ENCODE measurements at regions of chr14 and their contacts with region 1.

Region 1: DNA sequence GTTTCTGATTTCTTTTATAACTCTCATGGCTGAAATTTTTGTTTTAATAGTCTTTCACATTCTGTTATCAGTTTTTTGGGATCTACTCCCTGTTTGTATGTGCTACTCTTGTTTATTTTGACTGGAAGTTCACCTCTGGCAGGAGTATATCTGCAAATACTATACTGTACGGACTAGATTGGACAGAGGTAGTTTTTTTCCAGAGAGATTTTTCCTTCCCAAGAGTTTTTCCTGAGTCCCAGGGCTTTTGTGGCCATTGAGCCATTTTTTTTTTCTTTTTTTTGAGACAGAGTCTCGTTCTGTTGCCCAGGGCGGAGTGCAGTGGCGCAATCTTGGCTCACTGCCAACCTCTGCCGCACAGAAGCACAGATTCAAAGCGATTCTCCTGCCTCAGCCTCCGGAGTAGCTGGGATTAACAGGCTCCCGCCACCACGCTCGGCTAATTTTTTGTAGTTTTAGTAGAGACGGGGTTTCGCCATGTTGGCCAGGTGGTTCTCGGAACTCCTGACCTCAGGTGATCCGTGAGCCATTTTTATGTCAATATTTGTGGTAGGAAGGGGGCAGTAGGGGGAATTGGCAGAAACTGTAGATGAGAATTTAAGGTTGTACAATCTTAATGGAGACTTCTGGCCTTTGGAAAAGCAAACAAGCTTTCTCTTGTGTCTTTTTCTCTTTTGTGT is 19.3 kb downstream of the KTN1 start:
- DNase-seq: peak; percentile 50
- ATAC-seq: peak; percentile 92
- H3K4me3 ChIP-seq: peak overlapping the region; percentile 26 to 54
- H3K27ac ChIP-seq: peak overlapping the region; percentile 92
- H3K4me1 ChIP-seq: peaks cover 67% of the 10 kb centered on the region
- H3K27me3 ChIP-seq: no peaks in the 10 kb centered on the region
- CTCF ChIP-seq: no peak

Region 2: DNA sequence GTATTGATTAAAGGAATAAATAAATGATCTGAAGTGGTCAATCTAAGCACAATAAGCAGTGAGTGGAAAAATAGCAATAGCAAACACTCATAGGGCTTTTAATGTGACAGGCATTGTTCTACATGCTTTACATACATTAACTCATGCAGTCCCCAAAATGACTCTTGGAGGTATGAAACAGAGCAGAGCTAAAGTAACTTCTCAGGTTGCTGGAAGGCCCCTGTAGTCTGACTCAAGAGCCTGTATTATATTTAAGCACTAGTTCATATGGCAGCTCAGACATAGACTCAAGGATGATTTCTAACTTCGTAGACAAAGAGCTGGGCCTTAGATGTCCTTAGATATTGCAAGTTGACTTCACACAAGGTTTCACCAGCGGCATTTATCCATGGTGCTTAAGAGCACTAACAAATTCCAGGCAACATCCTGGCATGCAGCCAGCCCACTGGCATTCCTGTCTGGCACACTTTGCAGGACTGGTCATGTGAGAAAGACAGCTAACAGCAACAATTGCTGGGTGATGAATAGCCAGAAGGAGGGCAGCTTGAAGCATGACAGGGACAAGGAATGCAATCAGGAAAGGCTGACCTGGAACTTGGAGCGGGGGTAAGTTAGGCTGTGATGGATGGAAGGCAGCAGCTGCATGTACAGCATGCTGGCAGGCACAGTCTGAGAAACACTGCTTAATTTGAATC is 42.3 kb before region 1 on chr14:
- CTCF ChIA-PET with region 1: no interaction called
- POLR2A ChIA-PET with region 1: interaction called, 10 read pairs
- in situ Hi-C with region 1: no loop called
- intact Hi-C with region 1: no loop called
- DNase-seq: no peak
- ATAC-seq: peak; percentile 88
- H3K4me3 ChIP-seq: no peak overlapping the region
- H3K27ac ChIP-seq: peak overlapping the region; percentile 48
- H3K4me1 ChIP-seq: peaks cover 12% of the 10 kb centered on the region
- H3K27me3 ChIP-seq: no peaks in the 10 kb centered on the region
- CTCF ChIP-seq: no peak

Region 3: GRCh38 chr14:55645145-55645544 is 45.8 kb after region 1 on chr14:
- CTCF ChIA-PET with region 1: no interaction called
- POLR2A ChIA-PET with region 1: interaction called, 20 read pairs
- in situ Hi-C with region 1: no loop called
- intact Hi-C with region 1: no loop called
- DNase-seq: no peak
- ATAC-seq: no peak
- H3K4me3 ChIP-seq: no peak overlapping the region
- H3K27ac ChIP-seq: no peak overlapping the region
- H3K4me1 ChIP-seq: no peaks in the 10 kb centered on the region
- H3K27me3 ChIP-seq: no peaks in the 10 kb centered on the region
- CTCF ChIP-seq: no peak

Region 4: DNA sequence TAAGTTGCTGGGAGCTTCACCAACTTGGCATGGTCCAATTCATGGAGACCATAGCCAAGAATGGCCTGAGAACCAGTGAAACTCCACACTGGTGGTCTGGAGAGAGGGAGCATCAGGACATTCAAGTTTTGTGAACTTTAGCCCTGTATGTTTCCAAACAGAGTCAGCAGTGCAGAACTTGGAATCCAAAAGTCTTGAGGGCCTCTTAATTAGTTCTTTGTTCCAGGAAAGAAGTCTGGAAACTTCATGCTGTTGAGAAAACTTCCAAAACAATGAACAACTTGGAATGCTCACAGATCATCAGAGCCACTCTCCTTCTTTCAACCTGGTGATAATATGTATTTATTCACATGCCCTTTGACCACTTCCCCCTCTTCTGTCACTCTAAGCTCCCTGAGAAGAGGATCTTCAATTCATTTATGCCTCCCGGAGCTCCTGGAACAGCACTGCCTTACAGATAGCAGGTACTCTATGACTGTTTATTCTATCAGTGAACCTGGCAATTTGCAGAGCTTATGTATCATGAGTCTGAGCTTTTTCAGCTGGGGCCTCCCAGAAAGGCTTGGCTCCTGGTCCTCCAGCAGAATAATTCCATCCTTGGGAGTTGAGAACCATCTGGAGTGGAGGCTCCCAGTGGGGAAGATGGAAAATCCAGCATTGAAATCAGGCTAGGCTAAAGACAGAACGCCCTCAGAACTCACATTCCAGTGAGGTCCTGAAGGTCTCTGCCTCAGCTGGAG is 172.1 kb after region 1 on chr14:
- CTCF ChIA-PET with region 1: no interaction called
- POLR2A ChIA-PET with region 1: no interaction called
- in situ Hi-C with region 1: no loop called
- intact Hi-C with region 1: no loop called
- DNase-seq: no peak
- ATAC-seq: no peak
- H3K4me3 ChIP-seq: no peak overlapping the region
- H3K27ac ChIP-seq: no peak overlapping the region
- H3K4me1 ChIP-seq: no peaks in the 10 kb centered on the region
- H3K27me3 ChIP-seq: no peaks in the 10 kb centered on the region
- CTCF ChIP-seq: no peak

Measured in Panc1 (cell line).